ENCODE measurements at regions of chr19 and their contacts with region 1.

Region 1: GRCh38 chr19:11558881-11559828 is at the start of gene ELOF1:
- DNase-seq: peak; percentile 99
- ATAC-seq: peak; percentile 93
- H3K4me3 Mint-ChIP-seq: peak within 1 kb of the TSS; percentile 90
- H3K27ac Mint-ChIP-seq: peak within 1 kb of the TSS; percentile 94
- H3K4me1 Mint-ChIP-seq: peaks cover 44% of the 10 kb centered on the region
- H3K27me3 Mint-ChIP-seq: no peaks in the 10 kb centered on the region
- total RNA-seq, gene ELOF1: 48.0 to 53.7 TPM

Region 2: DNA sequence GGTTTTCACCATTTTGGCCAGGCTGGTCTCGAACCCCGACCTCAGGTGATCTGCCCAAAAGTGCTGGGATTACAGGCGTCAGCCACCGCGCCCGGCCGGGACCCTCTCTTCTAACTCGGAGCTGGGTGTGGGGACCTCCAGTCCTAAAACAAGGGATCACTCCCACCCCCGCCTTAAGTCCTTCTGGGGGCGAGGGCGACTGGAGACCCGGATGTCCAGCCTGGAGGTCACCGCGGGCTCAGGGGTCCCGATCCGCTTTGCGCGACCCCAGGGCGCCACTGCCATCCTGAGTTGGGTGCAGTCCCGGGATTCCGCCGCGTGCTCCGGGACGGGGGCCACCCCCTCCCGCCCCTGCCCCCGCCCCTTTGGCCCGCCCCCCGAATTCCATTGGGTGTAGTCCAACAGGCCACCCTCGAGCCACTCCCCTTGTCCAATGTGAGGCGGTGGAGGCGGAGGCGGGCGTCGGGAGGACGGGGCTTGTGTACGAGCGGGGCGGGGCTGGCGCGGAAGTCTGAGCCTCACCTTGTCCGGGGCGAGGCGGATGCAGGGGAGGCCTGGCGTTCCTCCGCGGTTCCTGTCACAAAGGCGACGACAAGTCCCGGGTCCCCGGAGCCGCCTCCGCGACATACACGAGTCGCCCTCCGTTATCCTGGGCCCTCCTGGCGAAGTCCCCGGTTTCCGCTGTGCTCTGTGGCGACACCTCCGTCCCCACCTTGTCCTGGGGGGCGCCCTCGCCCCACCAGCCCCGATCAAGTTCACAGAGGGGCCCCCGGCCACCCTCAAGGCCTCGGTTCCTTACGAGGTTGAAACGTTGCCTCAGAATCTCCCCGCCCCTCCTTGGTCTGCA is 468.9 kb before region 1 on chr19:
- CTCF ChIA-PET with region 1: no interaction called
- POLR2A ChIA-PET with region 1: no interaction called
- intact Hi-C with region 1: loop called in 1 of 2 experiments (anchors 1 kb)
- DNase-seq: peak; percentile 99
- ATAC-seq: peak; percentile 88
- H3K4me3 Mint-ChIP-seq: peak overlapping the region; percentile 93
- H3K27ac Mint-ChIP-seq: peak overlapping the region; percentile 97
- H3K4me1 Mint-ChIP-seq: peaks cover 51% of the 10 kb centered on the region
- H3K27me3 Mint-ChIP-seq: no peaks in the 10 kb centered on the region

Region 3: GRCh38 chr19:11346092-11346940 is 212.8 kb before region 1 on chr19 and contains the starts of genes CCDC159 and TMEM205:
- CTCF ChIA-PET with region 1: no interaction called
- POLR2A ChIA-PET with region 1: no interaction called
- intact Hi-C with region 1: loop called in 1 of 2 experiments (anchors 1 kb)
- DNase-seq: peak; percentile 99
- ATAC-seq: peak; percentile 99
- H3K4me3 Mint-ChIP-seq: peak within 1 kb of the TSS; percentile 83
- H3K27ac Mint-ChIP-seq: peak within 1 kb of the TSS; percentile 82
- H3K4me1 Mint-ChIP-seq: peaks cover 23% of the 10 kb centered on the region
- H3K27me3 Mint-ChIP-seq: no peaks in the 10 kb centered on the region
- total RNA-seq, gene CCDC159: 15.3 to 18.0 TPM
- total RNA-seq, gene TMEM205: 28.0 to 32.6 TPM

Region 4: GRCh38 chr19:11482384-11483050 is 76.6 kb before region 1 on chr19:
- CTCF ChIA-PET with region 1: interaction called, 4 read pairs
- POLR2A ChIA-PET with region 1: no interaction called
- intact Hi-C with region 1: loop called in 1 of 2 experiments (anchors 1 kb)
- DNase-seq: peak; percentile 93
- ATAC-seq: peak; percentile 64
- H3K4me3 Mint-ChIP-seq: peak overlapping the region; percentile 66
- H3K27ac Mint-ChIP-seq: peak overlapping the region; percentile 78
- H3K4me1 Mint-ChIP-seq: peaks cover 17% of the 10 kb centered on the region
- H3K27me3 Mint-ChIP-seq: peaks cover 20% of the 10 kb centered on the region

Region 5: DNA sequence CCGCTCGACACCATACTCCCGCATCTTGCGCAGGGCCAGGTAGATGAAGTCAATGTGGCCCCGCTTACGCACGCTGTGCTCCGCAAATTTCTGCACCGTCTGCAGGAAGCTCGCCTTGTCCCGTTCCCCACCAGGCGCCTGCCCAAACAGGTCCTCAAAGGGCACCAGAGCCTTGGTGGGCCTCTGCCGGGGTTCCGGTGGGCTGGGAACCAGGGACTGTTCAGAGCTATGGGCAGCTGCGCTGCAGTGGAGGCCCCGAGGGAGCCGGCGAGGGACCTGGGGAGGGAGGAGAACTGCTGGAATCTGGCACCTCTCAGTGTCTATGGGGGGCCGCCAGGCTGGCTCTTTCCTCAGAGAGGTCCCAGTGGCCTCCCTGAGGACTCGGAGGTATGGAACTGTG is 45.2 kb before region 1 on chr19:
- CTCF ChIA-PET with region 1: no interaction called
- POLR2A ChIA-PET with region 1: no interaction called
- intact Hi-C with region 1: no loop called
- DNase-seq: no peak
- ATAC-seq: no peak
- H3K4me3 Mint-ChIP-seq: no peak overlapping the region
- H3K27ac Mint-ChIP-seq: no peak overlapping the region
- H3K4me1 Mint-ChIP-seq: no peaks in the 10 kb centered on the region
- H3K27me3 Mint-ChIP-seq: no peaks in the 10 kb centered on the region

Region 6: DNA sequence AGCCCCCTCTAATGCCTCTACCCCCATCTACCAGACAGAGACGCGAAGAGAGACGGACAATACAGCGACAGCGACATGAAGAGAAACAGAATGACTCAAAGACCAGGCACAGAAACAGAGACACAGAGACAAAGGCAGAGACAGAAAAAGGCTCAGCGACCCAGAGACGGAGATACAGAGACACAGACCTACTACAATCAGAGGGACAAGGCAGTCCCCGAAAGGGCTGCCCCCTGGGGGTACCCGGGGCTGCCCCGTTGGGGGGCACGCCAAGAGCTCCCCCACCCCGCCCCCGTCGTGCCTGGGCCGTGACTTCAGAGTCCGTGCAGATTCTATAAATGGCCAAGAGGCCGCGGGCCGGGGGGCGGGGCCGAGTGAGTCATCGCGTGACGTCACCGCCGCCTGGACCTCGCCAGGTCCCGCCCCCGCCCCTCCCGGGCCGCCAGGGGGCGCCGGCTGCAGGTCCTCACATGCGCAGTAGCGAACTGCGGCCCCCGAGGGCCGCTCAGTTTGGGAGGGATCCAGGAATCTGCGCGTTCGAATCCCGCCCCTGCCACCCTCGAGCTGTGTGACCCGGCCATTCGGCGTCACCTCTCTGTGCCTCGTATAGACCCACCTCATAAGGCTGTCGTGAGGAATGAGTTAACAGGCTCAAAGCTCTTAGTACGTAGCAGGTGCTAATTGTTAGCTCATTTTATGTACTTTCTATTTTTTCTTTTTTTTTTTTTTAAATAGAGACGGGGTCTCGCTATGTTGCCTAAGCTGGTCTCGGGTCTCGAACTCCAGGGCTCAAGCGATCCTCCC is 23.2 kb before region 1 on chr19:
- CTCF ChIA-PET with region 1: interaction called, 8 read pairs
- POLR2A ChIA-PET with region 1: interaction called, 4 read pairs
- intact Hi-C with region 1: loop called in 1 of 2 experiments (anchors 1 kb)
- DNase-seq: peak; percentile 94
- ATAC-seq: peak; percentile 76
- H3K4me3 Mint-ChIP-seq: peak overlapping the region; percentile 2
- H3K27ac Mint-ChIP-seq: peak overlapping the region; percentile 51
- H3K4me1 Mint-ChIP-seq: peaks cover 17% of the 10 kb centered on the region
- H3K27me3 Mint-ChIP-seq: peaks cover 14% of the 10 kb centered on the region

Region 7: DNA sequence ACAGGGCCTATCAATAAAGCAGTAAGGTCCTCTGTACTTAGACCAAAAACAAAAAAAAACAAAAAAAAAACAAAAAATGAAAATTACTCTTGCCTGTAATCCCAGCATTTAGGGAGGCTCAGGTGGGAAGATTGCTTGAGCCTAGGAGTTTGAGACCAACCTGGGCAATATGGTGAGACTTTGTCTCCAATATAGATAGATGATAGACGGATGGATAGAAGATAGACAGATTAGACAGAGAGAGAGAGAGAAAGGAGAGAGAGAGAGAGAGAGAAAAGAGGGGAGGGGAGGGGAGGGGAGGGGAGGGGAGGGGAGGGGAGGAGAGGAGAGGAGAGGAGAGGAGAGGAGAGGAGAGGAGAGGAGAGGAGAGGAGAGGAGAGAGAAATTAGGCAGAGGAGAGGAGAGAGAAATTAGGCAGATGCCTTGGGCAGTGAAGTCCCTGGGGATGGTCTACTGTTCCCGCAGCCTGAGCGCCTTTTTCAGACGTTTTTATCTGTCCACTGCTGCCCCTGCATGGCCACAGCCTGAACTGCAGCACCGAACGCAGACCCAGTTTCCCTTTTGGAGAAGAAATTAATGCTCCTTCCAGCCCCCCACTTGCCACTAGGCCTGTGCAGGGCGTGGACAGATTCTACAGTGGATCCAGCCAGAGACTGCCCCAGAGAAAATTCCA is 28.3 kb after region 1 on chr19:
- CTCF ChIA-PET with region 1: interaction called, 13 read pairs
- POLR2A ChIA-PET with region 1: interaction called, 6 read pairs
- intact Hi-C with region 1: loop called (anchors 1 kb)
- DNase-seq: peak; percentile 89
- ATAC-seq: peak; percentile 96
- H3K4me3 Mint-ChIP-seq: no peak overlapping the region
- H3K27ac Mint-ChIP-seq: no peak overlapping the region
- H3K4me1 Mint-ChIP-seq: peaks cover 3% of the 10 kb centered on the region
- H3K27me3 Mint-ChIP-seq: no peaks in the 10 kb centered on the region

Region 8: DNA sequence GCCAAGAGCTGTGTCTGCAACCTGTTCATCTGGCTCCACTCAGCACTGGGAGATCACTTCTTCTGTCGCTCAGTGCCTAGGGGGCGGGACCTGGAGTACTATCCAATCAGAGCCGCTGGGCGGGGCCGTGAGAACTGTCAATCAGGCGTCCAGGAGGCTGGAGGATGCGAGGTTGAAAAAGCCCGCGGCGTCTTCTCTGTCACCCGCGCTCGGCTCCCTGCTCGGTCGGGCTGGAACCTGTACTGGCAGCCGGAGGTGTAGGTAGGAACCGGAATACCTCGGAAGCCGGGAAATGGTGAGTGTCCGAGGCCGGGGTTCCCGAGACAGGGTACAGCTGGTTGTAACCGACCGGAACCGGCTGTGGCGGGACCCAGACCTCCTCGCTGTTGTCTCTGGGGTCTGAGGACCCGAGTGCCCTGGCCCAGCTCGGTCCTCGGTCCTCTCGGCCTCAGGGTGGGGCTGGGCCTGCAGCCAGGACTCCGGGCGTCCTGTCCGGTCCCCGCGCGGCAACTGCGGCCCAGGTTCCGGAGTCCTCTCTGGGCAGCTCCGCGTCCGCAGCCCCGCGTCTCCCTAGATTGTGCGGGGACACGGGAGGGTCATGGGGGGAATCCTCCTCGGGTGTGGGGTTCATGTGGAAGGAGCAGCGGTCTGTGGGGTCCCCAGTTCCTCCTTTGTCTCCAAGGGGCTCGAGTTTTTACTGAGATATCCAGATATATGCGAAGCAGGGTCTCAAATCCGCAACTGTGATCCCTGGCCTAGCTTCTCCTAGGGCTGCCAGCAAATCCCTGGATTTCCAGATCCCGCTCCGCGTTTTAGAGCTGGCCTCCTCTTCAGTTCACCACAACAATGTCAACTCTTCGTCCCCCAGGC is 80.7 kb after region 1 on chr19:
- CTCF ChIA-PET with region 1: no interaction called
- POLR2A ChIA-PET with region 1: no interaction called
- intact Hi-C with region 1: loop called in 1 of 2 experiments (anchors 1 kb)
- DNase-seq: peak; percentile 98
- ATAC-seq: peak; percentile 100
- H3K4me3 Mint-ChIP-seq: peak overlapping the region; percentile 76
- H3K27ac Mint-ChIP-seq: no peak overlapping the region
- H3K4me1 Mint-ChIP-seq: no peaks in the 10 kb centered on the region
- H3K27me3 Mint-ChIP-seq: peaks cover 10% of the 10 kb centered on the region